Activated CD4-positive, alpha-beta memory T cell treated with anti-CD3 and anti-CD28 coated beads, Interleukin-2, amount 10 ng/mL, durations not matched to agents 7 days and 5 days (primary cell): ENCODE measurements at regions of chr1 and their contacts with region 1.

Region 1: GRCh38 chr1:26820784-26821269 is 5.7 kb upstream of the ZDHHC18 start:
- DNase-seq: peak; percentile 31
- H3K4me3 Mint-ChIP-seq: peak overlapping the region; percentile 35
- H3K27ac Mint-ChIP-seq: peak overlapping the region; percentile 32
- H3K4me1 Mint-ChIP-seq: peaks cover 23% of the 10 kb centered on the region
- H3K27me3 Mint-ChIP-seq: no peaks in the 10 kb centered on the region

Region 2: GRCh38 chr1:26618561-26618960 is 202.3 kb before region 1 on chr1:
- CTCF ChIA-PET with region 1: no interaction called
- POLR2A ChIA-PET with region 1: no interaction called
- DNase-seq: no peak
- H3K4me3 Mint-ChIP-seq: no peak overlapping the region
- H3K27ac Mint-ChIP-seq: no peak overlapping the region
- H3K4me1 Mint-ChIP-seq: peaks cover 20% of the 10 kb centered on the region
- H3K27me3 Mint-ChIP-seq: no peaks in the 10 kb centered on the region

Region 3: DNA sequence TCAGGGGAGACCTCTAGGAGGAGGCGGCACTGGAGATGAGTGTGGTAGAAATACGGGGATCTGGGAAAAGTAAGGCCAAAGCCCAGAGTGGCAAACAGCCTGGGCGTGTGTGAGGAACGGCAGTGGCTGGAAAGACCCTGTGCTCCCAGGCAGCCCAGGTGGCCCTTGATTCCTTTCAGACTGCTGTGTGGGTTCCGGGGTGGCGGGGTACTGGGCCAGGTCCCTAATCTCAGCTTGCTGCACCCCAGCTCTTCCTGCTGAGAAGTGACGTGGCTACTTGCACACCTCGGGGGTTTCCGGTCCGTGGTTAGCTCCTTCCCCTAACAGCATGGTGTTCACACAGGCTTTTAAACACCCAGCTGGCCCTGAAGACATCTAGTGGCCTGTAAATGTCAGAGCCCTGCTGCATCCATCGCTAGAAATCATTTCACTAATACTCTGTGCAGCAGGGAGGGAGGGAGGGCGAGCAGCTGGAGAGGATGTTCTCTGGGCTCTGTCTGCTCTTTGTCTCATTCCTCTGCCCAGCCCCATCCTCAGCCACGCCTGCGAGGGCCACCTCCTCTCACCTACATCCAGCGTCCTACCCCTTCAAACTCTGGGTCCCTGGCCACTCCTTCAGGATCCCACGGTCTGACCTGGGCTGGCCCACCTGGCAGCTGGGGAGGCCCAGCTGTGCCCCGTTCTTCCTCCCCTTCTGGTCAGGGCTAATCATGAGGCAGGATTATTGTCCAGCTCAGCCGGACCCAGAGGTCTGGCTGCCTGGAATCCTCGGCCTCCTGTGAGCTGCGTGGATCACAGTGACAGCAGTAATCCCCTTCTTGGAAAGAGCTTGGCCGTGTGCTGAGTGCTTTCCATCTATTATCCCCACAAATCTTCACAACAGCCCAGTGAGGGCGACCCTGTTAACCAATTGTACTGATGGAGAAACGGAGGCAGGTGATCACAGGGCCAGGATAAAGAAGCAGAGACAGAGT is 12.9 kb after region 1 on chr1:
- CTCF ChIA-PET with region 1: interaction called, 25 read pairs
- POLR2A ChIA-PET with region 1: interaction called, 12 read pairs
- DNase-seq: peak; percentile 94
- H3K4me3 Mint-ChIP-seq: peak overlapping the region; percentile 66
- H3K27ac Mint-ChIP-seq: peak overlapping the region; percentile 99
- H3K4me1 Mint-ChIP-seq: peaks cover 80% of the 10 kb centered on the region
- H3K27me3 Mint-ChIP-seq: no peaks in the 10 kb centered on the region

Region 4: GRCh38 chr1:26993237-26994019 is 172.6 kb after region 1 on chr1 and contains the start of gene TRNP1:
- CTCF ChIA-PET with region 1: no interaction called
- POLR2A ChIA-PET with region 1: no interaction called
- DNase-seq: peak; percentile 70
- H3K4me3 Mint-ChIP-seq: peak within 1 kb of the TSS; percentile 71
- H3K27ac Mint-ChIP-seq: no peak within 1 kb of the TSS
- H3K4me1 Mint-ChIP-seq: peaks cover 16% of the 10 kb centered on the region
- H3K27me3 Mint-ChIP-seq: peaks cover 57% of the 10 kb centered on the region
- total RNA-seq, gene TRNP1: not detected